ENCODE measurements at regions of chr22 and their contacts with region 1.

Region 1: GRCh38 chr22:32622004-32622743 is 147.6 kb downstream of the FBXO7 start:
- DNase-seq: peak; percentile 58
- ATAC-seq: peak; percentile 69 to 73

Region 2: DNA sequence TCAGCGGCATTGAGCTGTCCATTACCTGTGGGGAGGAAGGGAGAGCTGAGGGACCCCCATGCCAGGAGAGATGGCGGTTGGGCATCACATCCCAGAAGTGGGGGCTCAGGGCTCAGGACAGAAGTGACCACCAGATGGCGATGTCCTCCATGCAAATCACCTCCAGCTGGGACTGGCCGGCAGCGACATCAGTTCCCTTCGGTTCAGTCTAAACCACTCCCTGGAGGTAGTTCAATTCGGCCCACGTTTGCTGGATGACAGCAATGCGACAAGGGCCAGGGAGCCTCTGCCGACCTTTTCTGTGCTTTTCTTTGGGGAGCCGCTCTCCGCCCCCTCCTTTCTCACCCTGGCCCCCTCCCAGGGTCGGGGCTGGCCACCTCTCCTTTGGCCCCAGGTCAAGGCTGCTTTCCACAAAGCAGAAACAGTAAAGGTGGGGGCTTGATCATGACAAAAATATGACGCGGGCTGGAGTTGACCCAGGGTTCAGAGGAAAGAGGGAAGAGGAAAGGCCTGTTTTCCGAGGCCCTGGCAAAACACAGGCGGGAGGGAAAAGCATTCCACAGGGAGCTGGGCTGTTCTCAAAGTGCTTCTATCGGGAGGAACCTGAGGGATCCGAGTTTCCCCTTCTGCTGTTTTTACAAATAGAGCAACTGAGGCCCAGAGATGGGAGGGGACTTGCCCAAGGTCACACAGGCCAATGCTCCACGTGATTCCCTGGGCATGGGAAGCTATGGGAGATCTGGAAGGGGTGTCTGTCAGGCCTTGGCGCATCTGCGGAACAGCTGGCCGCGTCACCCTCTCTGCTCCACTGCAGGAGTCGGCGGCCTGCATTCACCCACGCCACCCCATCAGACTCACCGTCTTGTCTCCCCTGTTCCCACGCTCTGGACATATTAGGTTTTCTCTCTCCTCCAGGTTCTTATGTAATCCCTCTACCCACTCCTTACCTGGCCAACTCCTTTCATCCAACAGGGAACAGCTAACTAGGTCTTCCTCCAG is 92.9 kb before region 1 on chr22:
- intact Hi-C with region 1: loop called (anchors 5 kb)
- DNase-seq: peak; percentile 92
- ATAC-seq: peak; percentile 71 to 78

Region 3: DNA sequence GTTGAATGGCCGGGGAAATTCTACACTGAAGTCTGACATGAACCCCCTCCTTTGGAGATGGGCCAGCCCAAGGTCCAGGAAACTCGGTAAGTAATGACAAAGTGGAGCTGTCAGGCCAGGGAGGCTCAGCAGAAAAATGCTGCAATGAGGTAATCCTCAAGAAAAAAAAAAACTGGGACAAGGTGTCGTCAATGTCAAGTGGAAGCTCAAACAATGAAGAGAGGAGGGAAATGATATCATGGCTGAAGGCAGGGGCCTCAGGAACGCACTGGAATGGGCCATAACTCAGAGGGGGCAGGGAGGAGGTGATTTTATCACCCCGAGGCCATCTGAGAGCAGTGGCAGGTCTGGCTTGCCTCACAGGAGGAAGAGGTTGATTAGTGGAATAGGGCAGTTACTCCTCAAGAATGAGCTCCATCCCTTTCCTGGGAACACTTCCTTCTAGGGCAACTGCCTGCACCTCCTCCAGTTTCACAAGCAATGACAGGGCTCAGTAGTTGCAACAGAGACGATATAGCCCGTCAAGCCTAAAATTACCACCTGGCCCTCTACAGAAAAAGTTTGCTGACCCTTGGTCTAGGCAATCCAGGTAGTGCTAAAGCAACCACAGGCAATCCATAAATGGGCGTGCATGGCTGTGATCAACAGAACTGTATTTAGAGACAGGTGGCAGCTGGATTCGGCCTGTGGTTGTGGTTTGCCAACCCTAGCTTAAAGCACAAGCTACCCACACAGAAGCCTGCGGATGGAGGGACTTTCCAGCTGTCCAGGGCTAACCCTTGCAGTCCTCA is 82.3 kb before region 1 on chr22:
- intact Hi-C with region 1: loop called in 1 of 2 experiments (anchors 5 kb)
- DNase-seq: peak; percentile 42
- ATAC-seq: no peak

Measured in left cardiac atrium (tissue), 4 donors.